ENCODE measurements at regions of chr9 and their contacts with region 1.

Region 1: DNA sequence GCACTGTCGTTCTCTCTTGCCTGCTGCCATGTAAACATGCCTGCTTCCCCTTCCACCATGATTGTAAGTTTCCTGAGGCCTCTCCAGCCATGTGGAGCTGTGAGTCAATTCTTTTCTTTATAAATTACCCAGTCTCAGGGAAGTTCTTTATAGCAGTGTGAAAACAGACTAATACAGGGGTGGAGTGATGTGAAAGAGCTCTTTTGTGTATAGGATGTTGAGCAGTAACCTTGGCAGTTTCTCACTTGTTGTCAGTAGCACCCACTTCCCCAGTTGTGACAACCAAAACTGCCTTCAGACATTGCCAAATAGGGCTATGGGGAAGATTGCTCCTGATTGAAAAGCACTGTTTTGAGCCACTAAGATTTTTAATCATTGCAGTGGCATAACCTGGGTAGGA is 552.2 kb upstream of the ZNF462 start:
- DNase-seq: peak; percentile 21 to 30
- ATAC-seq: peak; percentile 80 to 89 (median 88)
- H3K4me3 ChIP-seq: no peak overlapping the region
- H3K4me3 Mint-ChIP-seq: peak overlapping the region; percentile 77
- H3K27ac ChIP-seq: peak overlapping the region; percentile 93
- H3K27ac Mint-ChIP-seq: peak overlapping the region; percentile 94 to 96
- H3K4me1 ChIP-seq: peaks cover 8% of the 10 kb centered on the region
- H3K4me1 Mint-ChIP-seq: peaks cover 76 to 83% of the 10 kb centered on the region in 2 donors
- H3K27me3 ChIP-seq: no peaks in the 10 kb centered on the region
- H3K27me3 Mint-ChIP-seq: no peaks in the 10 kb centered on the region
- CTCF ChIP-seq: no peak

Region 2: GRCh38 chr9:106207298-106207697 is 103.5 kb before region 1 on chr9:
- intact Hi-C with region 1: loop called (anchors 2 kb)
- DNase-seq: no peak
- ATAC-seq: peak; percentile 52 to 66 (median 62)
- H3K4me3 ChIP-seq: no peak overlapping the region
- H3K4me3 Mint-ChIP-seq: peak overlapping the region; percentile 14
- H3K27ac ChIP-seq: peak overlapping the region; percentile 53
- H3K27ac Mint-ChIP-seq: peak overlapping the region; percentile 76 to 79
- H3K4me1 ChIP-seq: peaks cover 17% of the 10 kb centered on the region
- H3K4me1 Mint-ChIP-seq: peaks cover 38 to 40% of the 10 kb centered on the region in 2 donors
- H3K27me3 ChIP-seq: no peaks in the 10 kb centered on the region
- H3K27me3 Mint-ChIP-seq: no peaks in the 10 kb centered on the region
- CTCF ChIP-seq: no peak

Region 3: DNA sequence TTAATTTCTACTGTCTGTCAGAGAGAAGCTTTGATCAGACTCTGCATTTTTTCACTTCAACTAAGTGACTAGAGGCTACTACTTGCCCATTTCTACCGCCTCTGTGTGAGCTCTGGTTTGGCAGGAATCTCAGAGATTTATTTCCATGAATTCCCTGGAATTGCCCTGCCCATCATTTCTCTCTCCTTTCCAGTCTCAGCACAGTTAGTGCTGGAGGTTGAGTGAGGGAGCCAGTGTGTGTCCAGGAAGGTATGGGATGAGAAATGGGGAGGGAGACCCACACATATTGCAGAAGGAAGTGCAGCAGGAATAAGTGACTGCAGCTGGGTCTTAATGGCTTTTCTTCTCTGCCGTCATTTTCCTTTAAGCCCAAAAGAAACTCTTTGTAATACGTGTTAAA is 109.0 kb after region 1 on chr9:
- intact Hi-C with region 1: loop called (anchors 5 kb)
- DNase-seq: no peak
- ATAC-seq: no peak
- H3K4me3 ChIP-seq: no peak overlapping the region
- H3K4me3 Mint-ChIP-seq: peak overlapping the region; percentile 45
- H3K27ac ChIP-seq: no peak overlapping the region
- H3K27ac Mint-ChIP-seq: peak overlapping the region; percentile 13 to 61
- H3K4me1 ChIP-seq: peaks cover 20% of the 10 kb centered on the region
- H3K4me1 Mint-ChIP-seq: peaks cover 52 to 68% of the 10 kb centered on the region in 2 donors
- H3K27me3 ChIP-seq: no peaks in the 10 kb centered on the region
- H3K27me3 Mint-ChIP-seq: no peaks in the 10 kb centered on the region
- CTCF ChIP-seq: no peak